Activated CD8-positive, alpha-beta T cell treated with anti-CD3 and anti-CD28 coated beads for 36 hours (primary cell): ENCODE measurements at regions of chr6 and their contacts with region 1.

Region 1: GRCh38 chr6:110815217-110816109 is at the start of gene CDK19:
- DNase-seq: peak; percentile 99
- ATAC-seq: peak; percentile 82
- H3K4me3 Mint-ChIP-seq: peak within 1 kb of the TSS; percentile 99
- H3K27ac Mint-ChIP-seq: peak within 1 kb of the TSS; percentile 99
- H3K4me1 Mint-ChIP-seq: peaks cover 28% of the 10 kb centered on the region
- H3K27me3 Mint-ChIP-seq: peaks cover 3% of the 10 kb centered on the region
- CTCF ChIP-seq: no peak
- total RNA-seq, gene CDK19: 11.8 to 13.1 TPM

Region 2: GRCh38 chr6:110944681-110945151 is 129.3 kb after region 1 on chr6:
- CTCF ChIA-PET with region 1: no interaction called
- POLR2A ChIA-PET with region 1: interaction called, 7 read pairs
- intact Hi-C with region 1: loop called (anchors 10 kb)
- DNase-seq: peak; percentile 67
- ATAC-seq: peak; percentile 98
- H3K4me3 Mint-ChIP-seq: no peak overlapping the region
- H3K27ac Mint-ChIP-seq: peak overlapping the region; percentile 70
- H3K4me1 Mint-ChIP-seq: peaks cover 7% of the 10 kb centered on the region
- H3K27me3 Mint-ChIP-seq: no peaks in the 10 kb centered on the region
- CTCF ChIP-seq: no peak